ENCODE measurements at regions of chr10 and their contacts with region 1.

Region 1: GRCh38 chr10:14648005-14648765 is 126.5 kb downstream of the FAM107B start:
- DNase-seq: peak; percentile 87 to 95 (median 89)
- H3K4me3 ChIP-seq: peak overlapping the region in 1 of 2 donors; percentile 51
- H3K4me3 Mint-ChIP-seq: peak overlapping the region; percentile 85 to 91 (median 88)
- H3K27ac ChIP-seq: peak overlapping the region; percentile 96
- H3K27ac Mint-ChIP-seq: peak overlapping the region; percentile 98 to 100 (median 100)
- H3K4me1 ChIP-seq: peaks cover 54% of the 10 kb centered on the region
- H3K4me1 Mint-ChIP-seq: peaks cover 49 to 80% (median 57%) of the 10 kb centered on the region in 4 donors
- H3K27me3 ChIP-seq: no peaks in the 10 kb centered on the region
- H3K27me3 Mint-ChIP-seq: no peaks in the 10 kb centered on the region

Region 2: GRCh38 chr10:14142606-14143250 is 505.5 kb before region 1 on chr10:
- CTCF ChIA-PET with region 1: no interaction called
- POLR2A ChIA-PET with region 1: no interaction called
- intact Hi-C with region 1: no loop called
- DNase-seq: no peak
- H3K4me3 ChIP-seq: no peak overlapping the region
- H3K4me3 Mint-ChIP-seq: no peak overlapping the region
- H3K27ac ChIP-seq: no peak overlapping the region
- H3K27ac Mint-ChIP-seq: no peak overlapping the region
- H3K4me1 ChIP-seq: no peaks in the 10 kb centered on the region
- H3K4me1 Mint-ChIP-seq: no peaks in the 10 kb centered on the region
- H3K27me3 ChIP-seq: peaks cover 4% of the 10 kb centered on the region
- H3K27me3 Mint-ChIP-seq: peaks cover 27 to 36% of the 10 kb centered on the region in 2 donors

Region 3: GRCh38 chr10:14556285-14556956 is 91.8 kb before region 1 on chr10:
- CTCF ChIA-PET with region 1: interaction called, 3 read pairs
- POLR2A ChIA-PET with region 1: interaction called, 11 read pairs
- intact Hi-C with region 1: no loop called
- DNase-seq: peak in 4 of 5 donors; percentile 34 to 64 (median 47)
- H3K4me3 ChIP-seq: no peak overlapping the region
- H3K4me3 Mint-ChIP-seq: peak overlapping the region; percentile 53 to 87 (median 75)
- H3K27ac ChIP-seq: peak overlapping the region; percentile 65
- H3K27ac Mint-ChIP-seq: peak overlapping the region; percentile 93 to 97 (median 94)
- H3K4me1 ChIP-seq: peaks cover 100% of the 10 kb centered on the region
- H3K4me1 Mint-ChIP-seq: peaks cover 80 to 99% (median 89%) of the 10 kb centered on the region in 4 donors
- H3K27me3 ChIP-seq: no peaks in the 10 kb centered on the region
- H3K27me3 Mint-ChIP-seq: no peaks in the 10 kb centered on the region

Region 4: DNA sequence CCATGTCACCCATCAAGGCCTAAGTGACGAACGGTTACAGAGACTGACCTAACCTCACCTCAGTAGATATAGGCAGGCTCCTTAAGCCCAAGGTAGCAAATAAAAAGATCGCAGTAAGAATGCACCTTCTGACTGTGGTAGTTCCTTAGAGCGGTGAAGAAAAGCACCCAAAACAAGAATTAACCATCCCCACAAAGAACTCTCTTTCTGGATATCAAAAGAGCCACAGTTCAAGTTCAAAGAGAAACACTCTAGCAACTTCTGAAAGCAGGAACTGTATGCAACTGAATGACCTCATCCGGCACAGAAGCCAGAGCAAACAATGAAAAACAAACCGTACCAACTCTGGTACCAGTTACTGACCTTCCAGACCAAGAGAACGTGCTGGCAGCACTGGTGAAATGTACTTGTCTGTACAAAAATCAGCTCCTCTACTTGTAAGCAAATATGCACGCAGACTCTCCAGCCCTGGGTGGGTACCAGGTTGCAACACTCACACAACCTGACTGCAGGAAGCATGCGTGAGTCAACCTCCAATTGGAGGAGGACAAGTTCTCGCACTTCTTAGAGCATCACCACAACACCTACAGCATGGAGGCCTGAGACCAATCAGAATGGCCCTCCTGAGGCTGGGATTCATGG is 76.2 kb before region 1 on chr10:
- CTCF ChIA-PET with region 1: no interaction called
- POLR2A ChIA-PET with region 1: interaction called, 26 read pairs
- intact Hi-C with region 1: loop called (anchors 1 kb)
- DNase-seq: peak; percentile 86 to 91 (median 89)
- H3K4me3 ChIP-seq: peak overlapping the region; percentile 70 to 75
- H3K4me3 Mint-ChIP-seq: peak overlapping the region; percentile 90 to 98 (median 94)
- H3K27ac ChIP-seq: peak overlapping the region; percentile 82
- H3K27ac Mint-ChIP-seq: peak overlapping the region; percentile 94 to 100 (median 97)
- H3K4me1 ChIP-seq: peaks cover 93% of the 10 kb centered on the region
- H3K4me1 Mint-ChIP-seq: peaks cover 58 to 97% (median 79%) of the 10 kb centered on the region in 4 donors
- H3K27me3 ChIP-seq: no peaks in the 10 kb centered on the region
- H3K27me3 Mint-ChIP-seq: no peaks in the 10 kb centered on the region

Region 5: GRCh38 chr10:14604181-14605142 is 43.7 kb before region 1 on chr10:
- CTCF ChIA-PET with region 1: no interaction called
- POLR2A ChIA-PET with region 1: interaction called, 14 read pairs
- intact Hi-C with region 1: loop called (anchors 1 kb)
- DNase-seq: peak; percentile 67 to 79 (median 70)
- H3K4me3 ChIP-seq: peak overlapping the region; percentile 48 to 86
- H3K4me3 Mint-ChIP-seq: peak overlapping the region; percentile 89 to 100 (median 96)
- H3K27ac ChIP-seq: peak overlapping the region; percentile 76
- H3K27ac Mint-ChIP-seq: peak overlapping the region; percentile 92 to 100 (median 97)
- H3K4me1 ChIP-seq: peaks cover 43% of the 10 kb centered on the region
- H3K4me1 Mint-ChIP-seq: peaks cover 38 to 59% (median 49%) of the 10 kb centered on the region in 4 donors
- H3K27me3 ChIP-seq: no peaks in the 10 kb centered on the region
- H3K27me3 Mint-ChIP-seq: no peaks in the 10 kb centered on the region

Region 6: GRCh38 chr10:14674376-14675050 is 26.3 kb after region 1 on chr10:
- CTCF ChIA-PET with region 1: no interaction called
- POLR2A ChIA-PET with region 1: no interaction called
- intact Hi-C with region 1: no loop called
- DNase-seq: no peak
- H3K4me3 ChIP-seq: no peak overlapping the region
- H3K4me3 Mint-ChIP-seq: no peak overlapping the region
- H3K27ac ChIP-seq: no peak overlapping the region
- H3K27ac Mint-ChIP-seq: no peak overlapping the region
- H3K4me1 ChIP-seq: no peaks in the 10 kb centered on the region
- H3K4me1 Mint-ChIP-seq: peaks cover 0 to 5% (median 3%) of the 10 kb centered on the region in 4 donors
- H3K27me3 ChIP-seq: no peaks in the 10 kb centered on the region
- H3K27me3 Mint-ChIP-seq: no peaks in the 10 kb centered on the region

Region 7: GRCh38 chr10:14723052-14723689 is 75.0 kb after region 1 on chr10:
- CTCF ChIA-PET with region 1: no interaction called
- POLR2A ChIA-PET with region 1: interaction called, 4 read pairs
- intact Hi-C with region 1: loop called (anchors 2 kb)
- DNase-seq: peak; percentile 34 to 60 (median 47)
- H3K4me3 ChIP-seq: no peak overlapping the region
- H3K4me3 Mint-ChIP-seq: peak overlapping the region; percentile 21 to 74 (median 44)
- H3K27ac ChIP-seq: peak overlapping the region; percentile 18
- H3K27ac Mint-ChIP-seq: peak overlapping the region; percentile 69 to 96 (median 91)
- H3K4me1 ChIP-seq: peaks cover 34% of the 10 kb centered on the region
- H3K4me1 Mint-ChIP-seq: peaks cover 31 to 36% (median 34%) of the 10 kb centered on the region in 4 donors
- H3K27me3 ChIP-seq: no peaks in the 10 kb centered on the region
- H3K27me3 Mint-ChIP-seq: no peaks in the 10 kb centered on the region